Activated B cell treated with CpG ODN at 0.5 μM for 24 hours (primary cell): ENCODE measurements at regions of chr5 and their contacts with region 1.

Region 1: GRCh38 chr5:100840384-100840783 is 62.7 kb downstream of the ST8SIA4 start:
- DNase-seq: no peak
- ATAC-seq: peak; percentile 90
- H3K4me3 Mint-ChIP-seq: peak overlapping the region; percentile 63
- H3K27ac Mint-ChIP-seq: peak overlapping the region; percentile 86
- H3K4me1 Mint-ChIP-seq: peaks cover 84% of the 10 kb centered on the region
- H3K27me3 Mint-ChIP-seq: no peaks in the 10 kb centered on the region
- CTCF ChIP-seq: no peak

Region 2: GRCh38 chr5:100755422-100755821 is 85.0 kb before region 1 on chr5:
- CTCF ChIA-PET with region 1: no interaction called
- POLR2A ChIA-PET with region 1: no interaction called
- intact Hi-C with region 1: no loop called
- DNase-seq: no peak
- ATAC-seq: no peak
- H3K4me3 Mint-ChIP-seq: no peak overlapping the region
- H3K27ac Mint-ChIP-seq: no peak overlapping the region
- H3K4me1 Mint-ChIP-seq: no peaks in the 10 kb centered on the region
- H3K27me3 Mint-ChIP-seq: peaks cover 4% of the 10 kb centered on the region
- CTCF ChIP-seq: no peak

Region 3: GRCh38 chr5:100852988-100853449 is 12.6 kb after region 1 on chr5:
- CTCF ChIA-PET with region 1: interaction called, 3 read pairs
- POLR2A ChIA-PET with region 1: interaction called, 46 read pairs
- intact Hi-C with region 1: loop called (anchors 1 kb)
- DNase-seq: no peak
- ATAC-seq: peak; percentile 92
- H3K4me3 Mint-ChIP-seq: peak overlapping the region; percentile 55
- H3K27ac Mint-ChIP-seq: peak overlapping the region; percentile 83
- H3K4me1 Mint-ChIP-seq: peaks cover 55% of the 10 kb centered on the region
- H3K27me3 Mint-ChIP-seq: no peaks in the 10 kb centered on the region
- CTCF ChIP-seq: no peak